ENCODE measurements at regions of chr4 and their contacts with region 1.

Region 1: GRCh38 chr4:38902695-38903094 is 35.1 kb downstream of the FAM114A1 start:
- DNase-seq: peak in 6 of 9 donors; percentile 27 to 60 (median 49)
- ATAC-seq: peak; percentile 84
- H3K4me3 ChIP-seq: no peak overlapping the region
- H3K4me3 Mint-ChIP-seq: no peak overlapping the region
- H3K27ac ChIP-seq: no peak overlapping the region
- H3K27ac Mint-ChIP-seq: peak overlapping the region in 1 of 9 donors; percentile 36
- H3K4me1 ChIP-seq: no peaks in the 10 kb centered on the region
- H3K4me1 Mint-ChIP-seq: peaks cover 0 to 12% (median 0%) of the 10 kb centered on the region in 7 donors
- H3K27me3 ChIP-seq: no peaks in the 10 kb centered on the region
- H3K27me3 Mint-ChIP-seq: peaks cover 0 to 9% (median 0%) of the 10 kb centered on the region in 5 donors

Region 2: GRCh38 chr4:38980903-38981676 is 78.4 kb after region 1 on chr4:
- CTCF ChIA-PET with region 1: no interaction called
- POLR2A ChIA-PET with region 1: no interaction called
- intact Hi-C with region 1: loop called in 1 of 2 experiments (anchors 5 kb)
- DNase-seq: no peak
- ATAC-seq: no peak
- H3K4me3 ChIP-seq: no peak overlapping the region
- H3K4me3 Mint-ChIP-seq: peak overlapping the region in 1 of 10 donors; percentile 50
- H3K27ac ChIP-seq: no peak overlapping the region
- H3K27ac Mint-ChIP-seq: peak overlapping the region in 2 of 9 donors; percentile 28 to 65
- H3K4me1 ChIP-seq: no peaks in the 10 kb centered on the region
- H3K4me1 Mint-ChIP-seq: peaks cover 2 to 55% (median 5%) of the 10 kb centered on the region in 7 donors
- H3K27me3 ChIP-seq: no peaks in the 10 kb centered on the region
- H3K27me3 Mint-ChIP-seq: no peaks in the 10 kb centered on the region

Region 3: GRCh38 chr4:39104255-39104654 is 201.6 kb after region 1 on chr4:
- CTCF ChIA-PET with region 1: interaction called, 4 read pairs
- POLR2A ChIA-PET with region 1: no interaction called
- intact Hi-C with region 1: loop called in 1 of 2 experiments (anchors 1 kb)
- DNase-seq: no peak
- ATAC-seq: no peak
- H3K4me3 ChIP-seq: no peak overlapping the region
- H3K4me3 Mint-ChIP-seq: no peak overlapping the region
- H3K27ac ChIP-seq: no peak overlapping the region
- H3K27ac Mint-ChIP-seq: no peak overlapping the region
- H3K4me1 ChIP-seq: no peaks in the 10 kb centered on the region
- H3K4me1 Mint-ChIP-seq: peaks cover 0 to 4% (median 0%) of the 10 kb centered on the region in 7 donors
- H3K27me3 ChIP-seq: no peaks in the 10 kb centered on the region
- H3K27me3 Mint-ChIP-seq: no peaks in the 10 kb centered on the region

Region 4: GRCh38 chr4:39304651-39305050 is 402.0 kb after region 1 on chr4:
- CTCF ChIA-PET with region 1: no interaction called
- POLR2A ChIA-PET with region 1: no interaction called
- intact Hi-C with region 1: loop called in 1 of 2 experiments (anchors 5 kb)
- DNase-seq: no peak
- ATAC-seq: no peak
- H3K4me3 ChIP-seq: no peak overlapping the region
- H3K4me3 Mint-ChIP-seq: no peak overlapping the region
- H3K27ac ChIP-seq: no peak overlapping the region
- H3K27ac Mint-ChIP-seq: peak overlapping the region in 1 of 9 donors; percentile 10
- H3K4me1 ChIP-seq: no peaks in the 10 kb centered on the region
- H3K4me1 Mint-ChIP-seq: peaks cover 0 to 10% (median 0%) of the 10 kb centered on the region in 7 donors
- H3K27me3 ChIP-seq: no peaks in the 10 kb centered on the region
- H3K27me3 Mint-ChIP-seq: no peaks in the 10 kb centered on the region